ENCODE measurements at regions of chr2 and their contacts with region 1.

Region 1: GRCh38 chr2:72579591-72580180 is 246.1 kb downstream of the EXOC6B start:
- DNase-seq: peak in 1 of 2 experiments; percentile 22
- H3K4me3 ChIP-seq: no peak overlapping the region
- H3K4me3 Mint-ChIP-seq: no peak overlapping the region
- H3K27ac Mint-ChIP-seq: no peak overlapping the region
- H3K4me1 ChIP-seq: peaks cover 15% of the 10 kb centered on the region
- H3K4me1 Mint-ChIP-seq: peaks cover 6% of the 10 kb centered on the region
- H3K27me3 ChIP-seq: no peaks in the 10 kb centered on the region
- H3K27me3 Mint-ChIP-seq: no peaks in the 10 kb centered on the region
- CTCF ChIP-seq: peak; percentile 69 to 81

Region 2: GRCh38 chr2:71545572-71546274 is 1034.0 kb before region 1 on chr2:
- CTCF ChIA-PET with region 1: no interaction called
- POLR2A ChIA-PET with region 1: no interaction called
- intact Hi-C with region 1: loop called (anchors 2 kb)
- DNase-seq: peak; percentile 64 to 72
- H3K4me3 ChIP-seq: no peak overlapping the region
- H3K4me3 Mint-ChIP-seq: no peak overlapping the region
- H3K27ac Mint-ChIP-seq: no peak overlapping the region
- H3K4me1 ChIP-seq: no peaks in the 10 kb centered on the region
- H3K4me1 Mint-ChIP-seq: peaks cover 7% of the 10 kb centered on the region
- H3K27me3 ChIP-seq: no peaks in the 10 kb centered on the region
- H3K27me3 Mint-ChIP-seq: peaks cover 4% of the 10 kb centered on the region
- CTCF ChIP-seq: peak; percentile 75 to 85

Region 3: GRCh38 chr2:71923887-71924533 is 655.7 kb before region 1 on chr2:
- CTCF ChIA-PET with region 1: no interaction called
- POLR2A ChIA-PET with region 1: no interaction called
- intact Hi-C with region 1: loop called (anchors 1 kb)
- DNase-seq: peak; percentile 71 to 76
- H3K4me3 ChIP-seq: no peak overlapping the region
- H3K4me3 Mint-ChIP-seq: no peak overlapping the region
- H3K27ac Mint-ChIP-seq: no peak overlapping the region
- H3K4me1 ChIP-seq: peaks cover 6% of the 10 kb centered on the region; the same call in 1 of the 2 replicates
- H3K4me1 Mint-ChIP-seq: no peaks in the 10 kb centered on the region
- H3K27me3 ChIP-seq: no peaks in the 10 kb centered on the region
- H3K27me3 Mint-ChIP-seq: no peaks in the 10 kb centered on the region
- CTCF ChIP-seq: peak; percentile 81 to 89

Region 4: GRCh38 chr2:72325592-72326422 is 253.9 kb before region 1 on chr2:
- CTCF ChIA-PET with region 1: interaction called, 6 read pairs
- POLR2A ChIA-PET with region 1: no interaction called
- intact Hi-C with region 1: loop called (anchors 5 kb)
- DNase-seq: peak; percentile 46 to 66
- H3K4me3 ChIP-seq: no peak overlapping the region
- H3K4me3 Mint-ChIP-seq: no peak overlapping the region
- H3K27ac Mint-ChIP-seq: no peak overlapping the region
- H3K4me1 ChIP-seq: no peaks in the 10 kb centered on the region
- H3K4me1 Mint-ChIP-seq: no peaks in the 10 kb centered on the region
- H3K27me3 ChIP-seq: no peaks in the 10 kb centered on the region
- H3K27me3 Mint-ChIP-seq: no peaks in the 10 kb centered on the region
- CTCF ChIP-seq: peak; percentile 29 to 74

Region 5: DNA sequence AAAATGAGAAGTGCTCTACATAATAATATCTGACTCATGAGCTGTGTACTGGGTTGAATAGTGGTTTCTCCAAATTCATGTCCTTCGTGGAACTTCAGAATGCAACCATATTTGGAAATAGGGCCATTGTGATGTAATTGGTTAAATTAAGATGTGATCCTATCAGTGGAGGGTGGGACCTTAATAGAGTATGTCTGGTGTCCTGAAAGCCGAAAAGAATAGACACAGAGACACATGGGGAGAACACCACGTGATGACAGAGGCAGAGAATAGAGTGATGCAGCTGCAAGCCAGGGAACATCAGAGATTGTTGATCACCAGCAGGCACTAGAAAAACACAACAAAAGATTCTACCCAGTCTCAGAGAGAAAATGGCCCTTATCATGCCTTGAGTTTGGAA is 64.0 kb before region 1 on chr2:
- CTCF ChIA-PET with region 1: interaction called, 6 read pairs
- POLR2A ChIA-PET with region 1: no interaction called
- intact Hi-C with region 1: loop called (anchors 5 kb)
- DNase-seq: no peak
- H3K4me3 ChIP-seq: no peak overlapping the region
- H3K4me3 Mint-ChIP-seq: no peak overlapping the region
- H3K27ac Mint-ChIP-seq: no peak overlapping the region
- H3K4me1 ChIP-seq: peaks cover 20% of the 10 kb centered on the region
- H3K4me1 Mint-ChIP-seq: peaks cover 13% of the 10 kb centered on the region
- H3K27me3 ChIP-seq: no peaks in the 10 kb centered on the region
- H3K27me3 Mint-ChIP-seq: no peaks in the 10 kb centered on the region
- CTCF ChIP-seq: no peak

Region 6: GRCh38 chr2:72745679-72746368 is 166.1 kb after region 1 on chr2:
- CTCF ChIA-PET with region 1: no interaction called
- POLR2A ChIA-PET with region 1: no interaction called
- intact Hi-C with region 1: loop called (anchors 2 kb)
- DNase-seq: peak in 1 of 2 experiments; percentile 66
- H3K4me3 ChIP-seq: no peak overlapping the region
- H3K4me3 Mint-ChIP-seq: no peak overlapping the region
- H3K27ac Mint-ChIP-seq: no peak overlapping the region
- H3K4me1 ChIP-seq: peaks cover 18% of the 10 kb centered on the region
- H3K4me1 Mint-ChIP-seq: no peaks in the 10 kb centered on the region
- H3K27me3 ChIP-seq: no peaks in the 10 kb centered on the region
- H3K27me3 Mint-ChIP-seq: no peaks in the 10 kb centered on the region
- CTCF ChIP-seq: peak; percentile 73 to 77